A549 (cell line): ENCODE measurements at regions of chr19 and their contacts with region 1.

Region 1: GRCh38 chr19:41363753-41364523 is at the start of gene B9D2:
- DNase-seq: peak; percentile 100
- ATAC-seq: peak; percentile 89 to 93
- H3K4me3 ChIP-seq: peak within 1 kb of the TSS; percentile 66
- H3K27ac ChIP-seq: peak within 1 kb of the TSS; percentile 92 to 94
- H3K4me1 ChIP-seq: peaks cover 49% of the 10 kb centered on the region
- CTCF ChIP-seq: no peak
- EP300 ChIP-seq: no peak
- POLR2A ChIP-seq: peak; percentile 80
- RAD21 ChIP-seq: no peak
- polyA plus RNA-seq, gene B9D2: 17.5 and 19.6 TPM in 2 replicates

Region 2: DNA sequence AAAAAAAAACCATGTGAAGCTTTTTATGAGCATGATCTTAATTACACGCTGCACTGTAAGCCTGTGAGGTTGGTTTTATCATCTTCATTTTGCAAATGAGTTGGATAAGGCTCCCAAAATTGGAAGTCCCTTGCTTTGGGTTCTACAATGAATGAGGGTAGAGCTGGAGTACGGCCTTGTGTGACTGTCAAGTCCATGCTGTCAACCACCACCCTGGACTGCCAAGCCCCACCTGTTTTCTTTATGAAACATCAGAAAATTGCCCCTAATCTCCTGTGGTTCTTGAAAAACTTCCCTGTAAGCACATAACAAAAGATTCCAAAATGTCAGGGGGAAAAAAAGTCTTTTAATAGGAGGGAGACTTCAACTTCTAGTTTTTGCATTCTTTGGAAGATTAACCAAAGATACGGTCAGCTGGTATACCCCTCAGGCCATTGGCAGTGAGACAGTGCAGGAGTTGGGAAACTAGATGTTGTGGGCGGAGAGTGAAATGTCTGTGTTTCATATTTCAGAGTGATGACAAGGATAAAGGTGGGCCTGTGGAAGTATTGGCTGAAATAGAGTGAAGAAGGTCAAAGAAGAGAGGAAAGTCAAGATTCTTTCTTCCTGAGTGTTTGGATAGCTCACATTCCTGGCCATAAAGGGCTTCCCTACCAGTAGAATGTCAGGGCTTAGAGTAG is 332.1 kb before region 1 on chr19:
- CTCF ChIA-PET with region 1: no interaction called
- POLR2A ChIA-PET with region 1: no interaction called
- DNase-seq: no peak
- ATAC-seq: no peak
- H3K4me3 ChIP-seq: no peak overlapping the region
- H3K27ac ChIP-seq: no peak overlapping the region
- H3K4me1 ChIP-seq: no peaks in the 10 kb centered on the region
- CTCF ChIP-seq: no peak
- EP300 ChIP-seq: no peak
- POLR2A ChIP-seq: no peak
- RAD21 ChIP-seq: no peak

Region 3: GRCh38 chr19:41226053-41226873 is 137.7 kb before region 1 on chr19:
- CTCF ChIA-PET with region 1: no interaction called
- POLR2A ChIA-PET with region 1: interaction called, 21 read pairs
- DNase-seq: peak; percentile 95 to 97
- ATAC-seq: peak; percentile 73 to 77
- H3K4me3 ChIP-seq: peak overlapping the region; percentile 41
- H3K27ac ChIP-seq: peak overlapping the region; percentile 91 to 95
- H3K4me1 ChIP-seq: peaks cover 64% of the 10 kb centered on the region
- CTCF ChIP-seq: no peak
- EP300 ChIP-seq: peak; percentile 72 to 93; a peak in 3 of 5 replicates
- POLR2A ChIP-seq: no peak; the same call in 1 of the 2 replicates
- RAD21 ChIP-seq: peak in 1 of 2 experiments; percentile 36; a peak in 3 of 5 replicates

Region 4: GRCh38 chr19:41376241-41376997 is 12.5 kb after region 1 on chr19 and contains the start of gene TMEM91:
- CTCF ChIA-PET with region 1: interaction called, 197 read pairs
- POLR2A ChIA-PET with region 1: interaction called, 34 read pairs
- DNase-seq: no peak
- ATAC-seq: peak; percentile 54 to 60
- H3K4me3 ChIP-seq: peak within 1 kb of the TSS; percentile 44
- H3K27ac ChIP-seq: peak within 1 kb of the TSS; percentile 45 to 74; a peak in 5 of 6 replicates
- H3K4me1 ChIP-seq: peaks cover 18% of the 10 kb centered on the region
- CTCF ChIP-seq: no peak
- EP300 ChIP-seq: no peak
- POLR2A ChIP-seq: peak; percentile 26; the same call in 1 of the 2 replicates
- RAD21 ChIP-seq: no peak
- polyA plus RNA-seq, gene TMEM91: 5.2 and 6.8 TPM in 2 replicates

Region 5: GRCh38 chr19:41409288-41409687 is 45.4 kb after region 1 on chr19:
- CTCF ChIA-PET with region 1: interaction called, 6 read pairs
- POLR2A ChIA-PET with region 1: interaction called, 10 read pairs
- DNase-seq: peak; percentile 55 to 60
- ATAC-seq: peak; percentile 55 to 58; a peak in 5 of 6 replicates
- H3K4me3 ChIP-seq: no peak overlapping the region
- H3K27ac ChIP-seq: no peak overlapping the region
- H3K4me1 ChIP-seq: peaks cover 12% of the 10 kb centered on the region
- CTCF ChIP-seq: no peak
- EP300 ChIP-seq: no peak
- POLR2A ChIP-seq: no peak
- RAD21 ChIP-seq: no peak

Region 6: GRCh38 chr19:41439441-41440222 is 75.7 kb after region 1 on chr19 and contains the start of gene DMAC2:
- CTCF ChIA-PET with region 1: interaction called, 11 read pairs
- POLR2A ChIA-PET with region 1: interaction called, 51 read pairs
- DNase-seq: peak; percentile 100
- ATAC-seq: peak; percentile 96 to 99
- H3K4me3 ChIP-seq: peak within 1 kb of the TSS; percentile 52
- H3K27ac ChIP-seq: peak within 1 kb of the TSS; percentile 81 to 86
- H3K4me1 ChIP-seq: peaks cover 13% of the 10 kb centered on the region; the same call in 2 of the 3 replicates
- CTCF ChIP-seq: peak; percentile 85
- EP300 ChIP-seq: no peak; a peak in 1 of 5 replicates
- POLR2A ChIP-seq: peak; percentile 80
- RAD21 ChIP-seq: peak; percentile 38 to 51; a peak in 2 of 5 replicates
- polyA plus RNA-seq, gene DMAC2: 128 and 132 TPM in 2 replicates